Caco-2 (cell line): ENCODE measurements at regions of chrX and their contacts with region 1.

Region 1: DNA sequence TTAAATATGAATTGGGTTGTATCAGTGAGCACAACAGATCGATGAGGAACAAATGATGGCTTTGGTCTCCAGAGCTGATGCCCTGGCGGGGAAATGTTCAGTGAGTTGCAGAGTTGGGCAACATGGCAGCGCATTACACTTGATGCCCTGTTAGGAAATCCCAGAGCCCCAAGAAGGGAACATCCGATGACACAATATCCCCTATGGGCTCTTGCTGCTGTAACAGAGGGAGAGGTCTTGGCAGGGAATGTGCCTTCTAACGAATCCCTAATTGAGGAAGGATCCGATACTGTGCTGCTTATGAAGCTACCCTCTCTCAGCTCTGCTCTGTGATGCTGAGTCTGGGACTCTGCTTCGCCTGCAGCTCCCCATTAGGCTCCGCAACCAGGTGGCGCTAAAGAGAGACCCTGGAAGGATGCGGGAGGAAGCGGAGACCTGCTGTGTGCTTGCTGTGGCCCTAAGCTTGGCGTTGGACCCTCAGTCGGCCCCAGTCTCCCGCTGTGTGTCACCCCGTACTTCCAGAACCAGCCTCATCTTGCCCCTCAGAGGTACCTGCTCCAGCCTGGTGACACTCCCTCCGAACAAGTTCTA is 38.9 kb downstream of the PDHA1 start:
- DNase-seq: peak; percentile 54 to 66
- H3K4me3 ChIP-seq: no peak overlapping the region
- H3K4me3 Mint-ChIP-seq: no peak overlapping the region
- H3K27ac Mint-ChIP-seq: no peak overlapping the region
- H3K4me1 ChIP-seq: no peaks in the 10 kb centered on the region
- H3K4me1 Mint-ChIP-seq: no peaks in the 10 kb centered on the region
- H3K27me3 ChIP-seq: no peaks in the 10 kb centered on the region
- H3K27me3 Mint-ChIP-seq: no peaks in the 10 kb centered on the region
- CTCF ChIP-seq: peak; percentile 49 to 78

Region 2: GRCh38 chrX:19177721-19178120 is 204.9 kb before region 1 on chrX:
- CTCF ChIA-PET with region 1: no interaction called
- POLR2A ChIA-PET with region 1: no interaction called
- intact Hi-C with region 1: no loop called
- DNase-seq: no peak
- H3K4me3 ChIP-seq: no peak overlapping the region
- H3K4me3 Mint-ChIP-seq: no peak overlapping the region
- H3K27ac Mint-ChIP-seq: no peak overlapping the region
- H3K4me1 ChIP-seq: no peaks in the 10 kb centered on the region
- H3K4me1 Mint-ChIP-seq: peaks cover 9% of the 10 kb centered on the region
- H3K27me3 ChIP-seq: no peaks in the 10 kb centered on the region
- H3K27me3 Mint-ChIP-seq: peaks cover under 1% of the 10 kb centered on the region
- CTCF ChIP-seq: no peak

Region 3: DNA sequence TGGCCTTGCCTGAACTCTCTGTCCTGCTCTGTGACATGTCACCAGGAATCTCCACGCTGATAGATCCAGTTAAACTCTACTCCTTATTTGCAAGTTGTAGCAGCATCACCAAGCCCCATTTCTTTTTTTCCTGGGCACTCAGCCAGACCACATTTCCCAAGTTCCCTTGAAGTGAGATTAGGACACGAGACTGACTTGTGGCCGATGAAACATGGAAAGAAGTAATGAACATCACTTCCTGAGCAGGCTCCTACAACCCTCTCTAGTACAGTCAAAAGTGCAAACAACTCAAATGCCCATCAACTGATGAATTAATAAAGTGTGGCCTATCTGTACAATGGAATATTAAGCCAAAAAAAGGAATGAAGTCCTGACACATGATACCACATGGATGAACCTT is 58.1 kb after region 1 on chrX:
- CTCF ChIA-PET with region 1: interaction called, 5 read pairs
- POLR2A ChIA-PET with region 1: no interaction called
- intact Hi-C with region 1: loop called (anchors 10 kb)
- DNase-seq: no peak
- H3K4me3 ChIP-seq: no peak overlapping the region
- H3K4me3 Mint-ChIP-seq: no peak overlapping the region
- H3K27ac Mint-ChIP-seq: no peak overlapping the region
- H3K4me1 ChIP-seq: no peaks in the 10 kb centered on the region
- H3K4me1 Mint-ChIP-seq: no peaks in the 10 kb centered on the region
- H3K27me3 ChIP-seq: no peaks in the 10 kb centered on the region
- H3K27me3 Mint-ChIP-seq: no peaks in the 10 kb centered on the region
- CTCF ChIP-seq: no peak

Region 4: GRCh38 chrX:19535476-19535875 is 152.8 kb after region 1 on chrX:
- CTCF ChIA-PET with region 1: interaction called, 15 read pairs
- POLR2A ChIA-PET with region 1: no interaction called
- intact Hi-C with region 1: no loop called
- DNase-seq: no peak
- H3K4me3 ChIP-seq: no peak overlapping the region
- H3K4me3 Mint-ChIP-seq: no peak overlapping the region
- H3K27ac Mint-ChIP-seq: no peak overlapping the region
- H3K4me1 ChIP-seq: no peaks in the 10 kb centered on the region
- H3K4me1 Mint-ChIP-seq: no peaks in the 10 kb centered on the region
- H3K27me3 ChIP-seq: no peaks in the 10 kb centered on the region
- H3K27me3 Mint-ChIP-seq: no peaks in the 10 kb centered on the region
- CTCF ChIP-seq: peak; percentile 23 to 25